CD8-positive, alpha-beta T cell (primary cell): ENCODE measurements at regions of chr2 and their contacts with region 1.

Region 1: GRCh38 chr2:55175254-55176025 is 56.7 kb downstream of the CLHC1 start:
- DNase-seq: peak in 2 of 9 experiments; percentile 58 to 70
- ATAC-seq: peak; percentile 91
- H3K4me3 ChIP-seq: no peak overlapping the region
- H3K4me3 Mint-ChIP-seq: no peak overlapping the region
- H3K27ac ChIP-seq: no peak overlapping the region
- H3K27ac Mint-ChIP-seq: no peak overlapping the region
- H3K4me1 ChIP-seq: no peaks in the 10 kb centered on the region
- H3K4me1 Mint-ChIP-seq: peaks cover 3% of the 10 kb centered on the region
- H3K27me3 ChIP-seq: no peaks in the 10 kb centered on the region
- H3K27me3 Mint-ChIP-seq: no peaks in the 10 kb centered on the region
- CTCF ChIP-seq: peak; percentile 67

Region 2: GRCh38 chr2:54106631-54107454 is 1068.6 kb before region 1 on chr2:
- CTCF ChIA-PET with region 1: interaction called, 6 read pairs
- POLR2A ChIA-PET with region 1: no interaction called
- intact Hi-C with region 1: loop called in 1 of 2 experiments (anchors 10 kb)
- DNase-seq: peak in 5 of 9 experiments; percentile 35 to 70 (median 53)
- ATAC-seq: peak; percentile 87
- H3K4me3 ChIP-seq: no peak overlapping the region
- H3K4me3 Mint-ChIP-seq: peak overlapping the region; percentile 11
- H3K27ac ChIP-seq: no peak overlapping the region
- H3K27ac Mint-ChIP-seq: no peak overlapping the region
- H3K4me1 ChIP-seq: no peaks in the 10 kb centered on the region
- H3K4me1 Mint-ChIP-seq: peaks cover 8% of the 10 kb centered on the region
- H3K27me3 ChIP-seq: no peaks in the 10 kb centered on the region
- H3K27me3 Mint-ChIP-seq: no peaks in the 10 kb centered on the region
- CTCF ChIP-seq: peak; percentile 70

Region 3: DNA sequence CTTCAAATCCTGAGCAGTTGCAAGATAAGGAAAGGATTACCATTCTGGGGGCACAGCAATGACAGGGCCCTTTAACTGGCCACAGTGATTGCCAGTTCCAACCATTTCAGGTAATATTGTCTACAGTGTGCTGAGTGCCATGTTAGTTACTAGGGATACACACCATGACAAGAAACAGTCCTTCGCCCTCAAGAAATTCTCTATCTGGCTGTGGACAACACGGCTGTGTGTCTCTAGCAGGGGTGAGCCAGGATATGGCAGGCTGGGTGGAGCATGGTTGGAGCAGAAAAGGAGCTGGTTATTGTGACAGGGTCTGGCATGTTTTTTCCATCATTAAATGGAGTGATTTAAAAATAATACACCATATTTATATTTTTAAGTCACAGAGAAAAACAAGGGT is 950.4 kb before region 1 on chr2:
- CTCF ChIA-PET with region 1: no interaction called
- POLR2A ChIA-PET with region 1: no interaction called
- intact Hi-C with region 1: no loop called
- DNase-seq: no peak
- ATAC-seq: no peak
- H3K4me3 ChIP-seq: no peak overlapping the region
- H3K4me3 Mint-ChIP-seq: no peak overlapping the region
- H3K27ac ChIP-seq: no peak overlapping the region
- H3K27ac Mint-ChIP-seq: no peak overlapping the region
- H3K4me1 ChIP-seq: no peaks in the 10 kb centered on the region
- H3K4me1 Mint-ChIP-seq: no peaks in the 10 kb centered on the region
- H3K27me3 ChIP-seq: no peaks in the 10 kb centered on the region
- H3K27me3 Mint-ChIP-seq: no peaks in the 10 kb centered on the region
- CTCF ChIP-seq: no peak

Region 4: GRCh38 chr2:54735636-54736035 is 439.8 kb before region 1 on chr2:
- CTCF ChIA-PET with region 1: no interaction called
- POLR2A ChIA-PET with region 1: no interaction called
- intact Hi-C with region 1: loop called in 1 of 2 experiments (anchors 10 kb)
- DNase-seq: no peak
- ATAC-seq: no peak
- H3K4me3 ChIP-seq: no peak overlapping the region
- H3K4me3 Mint-ChIP-seq: no peak overlapping the region
- H3K27ac ChIP-seq: no peak overlapping the region
- H3K27ac Mint-ChIP-seq: no peak overlapping the region
- H3K4me1 ChIP-seq: no peaks in the 10 kb centered on the region
- H3K4me1 Mint-ChIP-seq: no peaks in the 10 kb centered on the region
- H3K27me3 ChIP-seq: no peaks in the 10 kb centered on the region
- H3K27me3 Mint-ChIP-seq: peaks cover 18% of the 10 kb centered on the region
- CTCF ChIP-seq: no peak

Region 5: GRCh38 chr2:54899576-54900200 is 275.8 kb before region 1 on chr2:
- CTCF ChIA-PET with region 1: interaction called, 32 read pairs
- POLR2A ChIA-PET with region 1: no interaction called
- intact Hi-C with region 1: loop called (anchors 2 kb)
- DNase-seq: peak in 2 of 9 experiments; percentile 39 to 51
- ATAC-seq: no peak
- H3K4me3 ChIP-seq: no peak overlapping the region
- H3K4me3 Mint-ChIP-seq: no peak overlapping the region
- H3K27ac ChIP-seq: no peak overlapping the region
- H3K27ac Mint-ChIP-seq: no peak overlapping the region
- H3K4me1 ChIP-seq: peaks cover 11% of the 10 kb centered on the region
- H3K4me1 Mint-ChIP-seq: peaks cover 14% of the 10 kb centered on the region
- H3K27me3 ChIP-seq: no peaks in the 10 kb centered on the region
- H3K27me3 Mint-ChIP-seq: no peaks in the 10 kb centered on the region
- CTCF ChIP-seq: peak; percentile 25

Region 6: DNA sequence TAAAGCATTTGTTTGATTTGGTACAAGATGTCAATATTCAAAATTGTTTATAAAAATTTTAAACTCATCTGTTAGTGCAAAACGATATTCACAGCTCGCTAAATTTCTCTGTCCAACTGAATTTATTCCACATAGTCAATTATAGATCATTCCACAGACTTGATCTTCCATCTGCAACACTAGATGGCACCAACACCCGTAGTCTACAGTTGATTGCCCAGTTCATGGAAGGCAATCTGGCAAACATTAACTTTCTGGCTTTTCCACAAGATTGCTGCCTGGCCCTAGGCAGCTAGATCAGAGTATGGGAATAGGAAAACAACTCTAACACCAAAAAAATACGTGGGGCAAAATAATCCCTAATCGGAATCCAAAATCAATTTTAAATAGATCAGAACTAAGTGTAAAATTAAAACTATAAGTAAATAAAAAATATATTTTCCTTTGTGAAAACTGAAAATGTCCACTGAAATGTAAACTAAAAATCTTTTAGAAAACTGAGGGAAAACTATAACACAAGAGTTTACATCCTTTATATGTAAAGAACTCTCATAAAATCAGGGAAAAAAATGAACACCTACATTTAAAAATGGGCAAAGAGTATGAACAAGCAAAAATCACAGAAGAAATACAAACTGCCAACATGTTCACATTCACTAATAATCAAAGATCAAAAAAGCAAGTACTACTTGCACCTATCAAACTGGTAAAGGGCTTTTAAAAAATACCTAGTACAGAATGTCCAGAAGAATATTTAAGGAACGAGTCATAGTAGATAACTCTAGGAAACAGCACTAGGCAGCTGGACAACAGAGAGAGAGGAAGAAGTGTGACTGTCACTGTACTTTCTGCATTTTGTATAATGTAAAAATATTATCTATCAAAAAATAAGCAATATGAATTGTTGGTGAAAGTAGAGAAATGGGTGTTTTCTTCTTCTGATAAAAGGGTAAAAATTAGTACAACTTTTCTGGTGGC is 160.2 kb before region 1 on chr2:
- CTCF ChIA-PET with region 1: interaction called, 106 read pairs
- POLR2A ChIA-PET with region 1: no interaction called
- intact Hi-C with region 1: loop called in 1 of 2 experiments (anchors 1 kb)
- DNase-seq: peak in 7 of 9 experiments; percentile 22 to 73 (median 41)
- ATAC-seq: peak; percentile 39
- H3K4me3 ChIP-seq: no peak overlapping the region
- H3K4me3 Mint-ChIP-seq: no peak overlapping the region
- H3K27ac ChIP-seq: no peak overlapping the region
- H3K27ac Mint-ChIP-seq: no peak overlapping the region
- H3K4me1 ChIP-seq: peaks cover 28% of the 10 kb centered on the region
- H3K4me1 Mint-ChIP-seq: peaks cover 54% of the 10 kb centered on the region
- H3K27me3 ChIP-seq: no peaks in the 10 kb centered on the region
- H3K27me3 Mint-ChIP-seq: no peaks in the 10 kb centered on the region
- CTCF ChIP-seq: peak; percentile 59

Region 7: GRCh38 chr2:55296393-55296792 is 121.0 kb after region 1 on chr2:
- CTCF ChIA-PET with region 1: no interaction called
- POLR2A ChIA-PET with region 1: no interaction called
- intact Hi-C with region 1: no loop called
- DNase-seq: no peak
- ATAC-seq: no peak
- H3K4me3 ChIP-seq: no peak overlapping the region
- H3K4me3 Mint-ChIP-seq: no peak overlapping the region
- H3K27ac ChIP-seq: no peak overlapping the region
- H3K27ac Mint-ChIP-seq: no peak overlapping the region
- H3K4me1 ChIP-seq: no peaks in the 10 kb centered on the region
- H3K4me1 Mint-ChIP-seq: peaks cover 10% of the 10 kb centered on the region
- H3K27me3 ChIP-seq: no peaks in the 10 kb centered on the region
- H3K27me3 Mint-ChIP-seq: no peaks in the 10 kb centered on the region
- CTCF ChIP-seq: no peak